Motor neuron (in vitro differentiated cells): ENCODE measurements at regions of chr12 and their contacts with region 1.

Region 1: GRCh38 chr12:127381048-127381668 is 885.8 kb upstream of the TMEM132C start:
- ATAC-seq: peak; percentile 92 to 100 (median 96)
- H3K4me3 ChIP-seq: peak overlapping the region in 3 of 5 donors; percentile 8 to 26 (median 16)
- H3K27ac ChIP-seq: no peak overlapping the region
- H3K4me1 ChIP-seq: no peaks in the 10 kb centered on the region

Region 2: GRCh38 chr12:126742241-126742641 is 638.9 kb before region 1 on chr12:
- in situ Hi-C with region 1: no loop called
- ATAC-seq: no peak
- H3K4me3 ChIP-seq: no peak overlapping the region
- H3K27ac ChIP-seq: no peak overlapping the region
- H3K4me1 ChIP-seq: no peaks in the 10 kb centered on the region

Region 3: DNA sequence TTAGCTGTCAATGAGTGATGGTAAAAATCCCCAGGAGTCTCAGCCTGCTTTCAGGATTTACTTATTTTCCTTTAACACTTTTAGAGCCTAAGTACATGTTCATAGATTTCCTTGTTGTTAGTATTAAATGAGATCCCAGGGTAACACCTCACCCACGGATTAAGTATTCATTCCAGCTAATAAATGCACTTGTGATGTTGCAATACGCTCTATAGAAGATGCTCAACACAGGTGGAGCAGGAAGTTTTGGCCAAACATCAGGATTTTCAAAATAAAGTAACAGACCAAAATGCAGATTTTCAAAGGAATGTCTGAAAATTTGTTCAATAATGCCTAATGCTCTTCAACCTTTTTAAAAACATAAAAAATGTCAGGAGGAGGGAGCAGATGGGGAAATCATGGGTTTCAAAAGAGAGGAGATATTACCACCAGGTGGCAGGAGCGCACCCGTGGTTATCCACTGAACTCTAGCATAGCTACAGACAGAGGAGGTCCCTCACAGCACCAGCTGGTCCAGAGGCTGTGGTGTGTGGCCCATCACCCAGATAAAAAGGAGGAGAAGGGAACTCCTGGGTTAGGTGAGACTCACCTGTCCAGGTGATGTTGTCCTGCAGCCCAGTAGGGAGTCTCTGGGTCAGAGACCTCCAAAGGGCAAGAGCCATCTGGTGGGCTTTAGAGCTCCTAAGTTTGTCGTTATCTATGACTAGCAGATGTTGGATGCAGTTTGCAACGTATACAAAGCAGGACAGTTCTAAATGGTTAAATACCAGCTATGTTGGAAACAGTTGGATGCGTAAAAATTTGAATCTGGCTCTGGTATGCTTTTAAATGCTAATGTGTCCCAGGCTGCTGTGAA is 272.6 kb before region 1 on chr12:
- in situ Hi-C with region 1: loop called in 1 of 9 experiments (anchors 25 kb)
- ATAC-seq: peak in 3 of 8 experiments; percentile 97 to 98 (median 98)
- H3K4me3 ChIP-seq: no peak overlapping the region
- H3K27ac ChIP-seq: no peak overlapping the region
- H3K4me1 ChIP-seq: no peaks in the 10 kb centered on the region

Region 4: DNA sequence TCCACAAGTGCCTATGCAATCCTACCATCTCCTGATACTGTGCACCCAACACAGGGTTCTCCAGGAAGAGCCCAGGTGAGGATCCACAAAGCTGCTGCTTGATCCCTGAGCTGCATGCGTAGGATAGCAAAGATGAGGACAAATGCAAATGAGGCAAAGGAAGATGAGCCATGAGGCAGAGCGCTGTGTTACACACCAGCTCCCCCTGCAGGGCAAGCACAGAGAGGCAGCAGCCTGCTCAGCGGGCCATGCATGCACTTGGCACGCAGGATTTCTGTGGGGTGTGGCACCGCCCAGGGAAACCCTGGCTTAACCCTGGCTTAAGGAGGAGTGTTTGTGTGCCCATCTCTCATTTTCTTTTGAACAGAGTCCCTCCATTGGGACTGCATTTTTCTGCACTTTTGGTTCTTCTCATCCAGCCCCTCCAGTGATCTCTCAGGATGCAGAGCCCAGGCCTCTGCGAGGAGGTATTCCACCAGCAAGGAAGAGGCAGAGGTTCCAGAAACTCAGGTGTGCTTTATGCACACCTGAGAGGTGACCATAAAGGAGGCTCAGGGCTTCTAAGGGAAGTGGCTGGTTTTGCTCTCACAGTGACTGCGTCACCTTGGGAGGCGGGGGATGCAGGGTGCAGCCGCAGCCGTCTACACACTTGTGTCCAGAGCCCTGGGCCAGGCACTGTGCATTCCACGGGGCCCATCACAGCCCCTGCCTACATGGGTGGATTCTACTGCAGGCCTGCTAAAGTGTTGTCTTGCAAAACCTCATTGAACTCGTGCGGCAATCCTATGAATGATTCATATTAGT is 87.4 kb before region 1 on chr12:
- in situ Hi-C with region 1: no loop called
- ATAC-seq: peak in 5 of 8 experiments; percentile 61 to 99 (median 99)
- H3K4me3 ChIP-seq: no peak overlapping the region
- H3K27ac ChIP-seq: no peak overlapping the region
- H3K4me1 ChIP-seq: no peaks in the 10 kb centered on the region

Region 5: DNA sequence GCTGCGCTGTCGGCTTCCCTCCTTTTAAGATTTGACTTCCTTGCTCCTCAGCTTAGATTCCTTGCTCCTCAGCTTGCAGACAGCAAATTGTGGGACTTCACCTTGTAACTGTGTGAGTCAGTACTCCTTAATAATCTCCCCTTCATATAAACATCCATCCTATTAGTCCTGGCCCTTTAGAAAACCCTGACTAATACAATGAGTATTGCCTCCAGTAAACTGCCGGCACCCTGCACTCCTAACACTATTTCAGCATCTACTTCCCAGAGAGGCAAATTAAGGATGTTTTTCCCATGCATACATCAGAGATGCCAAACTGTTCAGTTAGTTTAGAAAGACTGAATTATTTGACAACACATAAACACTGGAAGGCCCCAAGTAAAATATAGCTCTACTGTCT is 274.5 kb after region 1 on chr12:
- in situ Hi-C with region 1: loop called in 1 of 9 experiments (anchors 25 kb)
- ATAC-seq: peak in 1 of 8 experiments; percentile 37
- H3K4me3 ChIP-seq: no peak overlapping the region
- H3K27ac ChIP-seq: no peak overlapping the region
- H3K4me1 ChIP-seq: no peaks in the 10 kb centered on the region

Region 6: DNA sequence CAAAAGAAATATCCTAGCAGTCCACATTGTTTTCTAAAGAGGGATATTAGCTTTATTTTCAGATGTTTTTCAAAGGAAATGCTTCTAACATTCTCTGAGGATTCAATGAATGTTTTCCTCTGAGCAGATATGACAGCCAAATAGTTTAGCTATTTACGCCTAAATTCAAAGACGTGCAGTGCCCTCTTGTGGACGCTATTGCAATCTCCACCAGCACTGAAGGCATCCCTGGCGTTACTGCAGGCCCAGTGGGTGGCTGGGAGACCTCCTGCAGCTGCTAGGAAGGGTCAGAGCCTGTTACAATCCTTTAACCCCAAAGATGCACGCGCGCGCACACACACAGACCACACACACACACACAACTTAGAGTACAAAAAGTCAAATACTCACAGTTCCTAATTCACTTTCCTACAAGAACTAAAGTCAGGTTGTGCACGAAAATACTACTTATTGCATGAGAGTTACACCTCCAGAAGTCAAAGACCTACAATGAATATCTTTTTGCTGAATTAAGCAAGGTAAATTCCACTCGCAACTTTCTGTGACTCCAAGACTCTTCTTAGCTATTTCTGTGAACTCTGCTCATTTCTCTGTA is 296.5 kb after region 1 on chr12:
- in situ Hi-C with region 1: loop called in 2 of 9 experiments (anchors 25 kb)
- ATAC-seq: peak; percentile 47 to 99 (median 84)
- H3K4me3 ChIP-seq: no peak overlapping the region
- H3K27ac ChIP-seq: no peak overlapping the region
- H3K4me1 ChIP-seq: no peaks in the 10 kb centered on the region

Region 7: GRCh38 chr12:127903146-127903545 is 522.0 kb after region 1 on chr12:
- in situ Hi-C with region 1: no loop called
- ATAC-seq: peak in 3 of 8 experiments; percentile 76 to 98 (median 95)
- H3K4me3 ChIP-seq: no peak overlapping the region
- H3K27ac ChIP-seq: no peak overlapping the region
- H3K4me1 ChIP-seq: no peaks in the 10 kb centered on the region